Aorta (tissue), 5 donors: ENCODE measurements at regions of chr1 and their contacts with region 1.

Region 1: GRCh38 chr1:238672262-238672661 is 714.1 kb upstream of the CHRM3 start:
- DNase-seq: no peak
- ATAC-seq: no peak
- H3K4me3 ChIP-seq: no peak overlapping the region
- H3K27ac ChIP-seq: no peak overlapping the region
- H3K4me1 ChIP-seq: no peaks in the 10 kb centered on the region
- H3K27me3 ChIP-seq: no peaks in the 10 kb centered on the region

Region 2: DNA sequence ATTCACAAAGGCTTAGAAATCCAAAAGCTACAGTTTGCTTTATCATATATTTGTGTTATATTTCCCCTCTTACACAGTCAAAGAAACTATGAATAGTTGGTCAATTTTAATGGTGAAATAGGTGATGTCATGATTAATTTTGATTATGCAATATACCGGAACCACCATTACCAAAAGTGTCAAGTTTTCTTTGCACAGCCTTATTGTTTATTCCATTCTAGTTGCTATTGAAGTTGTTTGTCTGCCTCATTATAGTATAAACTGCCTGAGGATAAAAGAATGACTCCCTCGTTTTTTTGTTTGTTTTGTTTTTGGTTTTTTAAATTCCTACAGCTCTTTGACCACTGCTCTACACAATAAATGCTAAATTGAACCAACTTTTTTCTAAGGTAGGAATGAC is 90.9 kb before region 1 on chr1:
- intact Hi-C with region 1: no loop called
- DNase-seq: no peak
- ATAC-seq: no peak
- H3K4me3 ChIP-seq: no peak overlapping the region
- H3K27ac ChIP-seq: no peak overlapping the region
- H3K4me1 ChIP-seq: no peaks in the 10 kb centered on the region
- H3K27me3 ChIP-seq: no peaks in the 10 kb centered on the region

Region 3: DNA sequence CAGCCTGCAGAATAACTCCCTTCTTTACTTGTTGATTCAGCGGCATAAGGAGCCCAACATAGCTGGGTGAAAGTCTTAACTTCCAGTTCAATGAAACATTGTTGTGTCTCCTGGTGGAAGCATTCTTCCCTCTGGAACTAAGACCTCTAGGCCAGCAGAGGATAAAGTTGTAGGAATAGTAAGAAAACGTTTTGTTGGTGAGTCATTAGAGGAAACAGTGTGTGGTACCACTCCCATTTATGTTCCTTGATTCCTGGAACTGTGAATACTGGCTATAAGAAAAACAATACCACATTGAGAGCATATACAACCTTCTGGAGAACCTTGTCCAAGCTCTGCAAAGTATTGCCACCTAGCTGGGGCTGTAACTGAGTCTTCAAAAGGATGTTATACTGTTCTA is 44.2 kb before region 1 on chr1:
- intact Hi-C with region 1: loop called in 1 of 2 experiments (anchors 2 kb)
- DNase-seq: no peak
- ATAC-seq: no peak
- H3K4me3 ChIP-seq: no peak overlapping the region
- H3K27ac ChIP-seq: no peak overlapping the region
- H3K4me1 ChIP-seq: no peaks in the 10 kb centered on the region
- H3K27me3 ChIP-seq: no peaks in the 10 kb centered on the region

Region 4: DNA sequence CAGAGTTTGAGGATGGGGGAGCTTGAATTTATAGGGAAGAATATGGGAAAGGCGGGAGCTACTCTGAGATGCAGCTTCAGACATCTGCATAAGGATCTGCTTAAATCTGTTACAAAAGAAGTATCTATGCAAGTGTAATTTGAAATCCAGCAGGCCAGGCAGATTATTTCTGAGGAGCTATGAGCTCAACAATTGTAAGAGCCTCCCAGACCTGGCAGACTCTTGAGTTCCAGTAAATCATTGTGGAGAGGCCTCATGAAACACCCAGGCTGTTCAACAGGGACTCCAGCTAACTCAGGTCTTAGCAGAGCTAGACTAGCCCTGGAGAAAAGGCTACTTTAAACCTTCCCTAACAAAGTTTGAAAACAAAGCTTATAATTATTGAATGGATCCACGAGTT is 66.6 kb after region 1 on chr1:
- intact Hi-C with region 1: no loop called
- DNase-seq: no peak
- ATAC-seq: peak; percentile 54
- H3K4me3 ChIP-seq: no peak overlapping the region
- H3K27ac ChIP-seq: no peak overlapping the region
- H3K4me1 ChIP-seq: no peaks in the 10 kb centered on the region
- H3K27me3 ChIP-seq: no peaks in the 10 kb centered on the region